GM10248 (cell line): ENCODE measurements at regions of chr13 and their contacts with region 1.

Region 1: DNA sequence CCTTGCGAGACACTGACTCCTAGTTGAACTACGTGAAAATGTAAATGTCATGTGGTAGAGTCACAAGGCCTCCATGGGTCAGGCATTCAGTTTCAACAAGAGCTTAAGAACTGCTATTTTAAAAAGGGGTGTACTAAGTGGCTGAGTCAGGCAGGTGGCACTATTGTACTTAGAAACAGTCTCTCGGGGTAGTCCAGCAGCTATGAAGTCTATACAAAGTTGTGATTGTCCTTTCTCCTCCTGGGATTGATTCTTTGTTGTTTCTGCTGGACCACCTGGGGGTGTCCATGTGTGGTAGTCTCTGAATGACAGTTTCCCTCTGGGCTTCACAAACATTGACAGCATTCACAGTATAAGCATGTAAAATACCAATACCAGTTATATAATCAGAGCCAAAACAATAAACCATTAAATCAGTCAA is 33.0 kb downstream of the UGGT2 start:
- DNase-seq: peak; percentile 41
- CTCF ChIP-seq: peak; percentile 63

Region 2: GRCh38 chr13:96003304-96003703 is 16.9 kb before region 1 on chr13:
- CTCF ChIA-PET with region 1: interaction called, 11 read pairs
- POLR2A ChIA-PET with region 1: no interaction called
- DNase-seq: no peak
- CTCF ChIP-seq: no peak

Region 3: DNA sequence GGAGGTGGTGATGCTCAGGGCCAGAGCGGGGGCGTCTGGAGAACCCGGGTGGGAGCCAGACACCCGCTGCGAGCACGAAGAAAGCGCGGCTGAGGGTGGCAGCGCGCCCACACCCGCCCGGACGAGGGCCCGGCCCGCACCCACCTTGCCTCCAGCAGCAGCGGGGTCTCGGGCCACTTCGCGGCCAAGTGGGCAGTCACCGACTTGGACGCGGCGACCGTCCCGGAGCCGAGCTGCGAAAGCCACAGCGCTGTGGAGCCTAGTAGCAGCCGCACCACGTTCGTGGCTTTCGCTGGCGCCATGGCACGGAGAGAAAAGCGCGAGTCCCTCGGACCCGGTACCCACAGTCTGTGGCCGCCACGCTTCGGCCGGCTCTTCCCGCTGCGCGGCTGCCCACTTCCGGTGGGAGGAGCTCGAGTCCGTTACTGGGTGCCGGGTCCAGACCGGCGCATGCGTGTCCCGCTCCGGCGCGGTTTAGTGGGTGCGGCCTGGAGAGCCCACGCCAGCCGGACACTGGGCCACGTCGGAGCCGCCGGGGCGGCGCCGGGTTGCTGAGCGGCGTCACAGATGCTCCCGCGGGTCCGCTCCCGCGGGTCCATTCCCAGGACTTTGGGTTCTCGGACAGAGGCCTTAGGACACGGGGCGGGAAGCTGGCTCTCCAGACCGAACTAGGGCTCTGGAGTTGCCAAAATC is 33.0 kb after region 1 on chr13 and contains the start of gene UGGT2:
- CTCF ChIA-PET with region 1: interaction called, 10 read pairs
- POLR2A ChIA-PET with region 1: no interaction called
- DNase-seq: peak; percentile 98
- CTCF ChIP-seq: no peak

Region 4: DNA sequence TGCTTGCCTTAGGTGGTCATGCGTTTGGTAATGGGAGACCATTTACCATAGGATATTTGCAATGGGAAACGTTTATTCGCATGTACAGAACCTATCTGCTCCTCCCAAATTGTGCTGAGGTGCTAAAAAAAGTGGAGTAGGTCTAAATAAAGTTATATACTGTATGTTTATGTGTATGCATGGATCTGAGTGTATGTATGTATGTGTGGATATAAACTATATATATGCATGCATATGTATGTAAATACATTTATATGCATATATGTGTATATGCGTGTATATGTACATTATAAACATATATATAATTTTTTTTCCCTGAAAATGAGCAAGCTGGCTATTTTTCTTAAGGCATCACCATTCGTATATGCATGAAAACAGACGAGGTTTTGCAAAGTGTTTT is 165.7 kb after region 1 on chr13:
- CTCF ChIA-PET with region 1: no interaction called
- POLR2A ChIA-PET with region 1: no interaction called
- DNase-seq: no peak
- CTCF ChIP-seq: no peak

Region 5: GRCh38 chr13:96229356-96229755 is 209.2 kb after region 1 on chr13:
- CTCF ChIA-PET with region 1: interaction called, 16 read pairs
- POLR2A ChIA-PET with region 1: no interaction called
- DNase-seq: peak; percentile 6
- CTCF ChIP-seq: peak; percentile 42

Region 6: DNA sequence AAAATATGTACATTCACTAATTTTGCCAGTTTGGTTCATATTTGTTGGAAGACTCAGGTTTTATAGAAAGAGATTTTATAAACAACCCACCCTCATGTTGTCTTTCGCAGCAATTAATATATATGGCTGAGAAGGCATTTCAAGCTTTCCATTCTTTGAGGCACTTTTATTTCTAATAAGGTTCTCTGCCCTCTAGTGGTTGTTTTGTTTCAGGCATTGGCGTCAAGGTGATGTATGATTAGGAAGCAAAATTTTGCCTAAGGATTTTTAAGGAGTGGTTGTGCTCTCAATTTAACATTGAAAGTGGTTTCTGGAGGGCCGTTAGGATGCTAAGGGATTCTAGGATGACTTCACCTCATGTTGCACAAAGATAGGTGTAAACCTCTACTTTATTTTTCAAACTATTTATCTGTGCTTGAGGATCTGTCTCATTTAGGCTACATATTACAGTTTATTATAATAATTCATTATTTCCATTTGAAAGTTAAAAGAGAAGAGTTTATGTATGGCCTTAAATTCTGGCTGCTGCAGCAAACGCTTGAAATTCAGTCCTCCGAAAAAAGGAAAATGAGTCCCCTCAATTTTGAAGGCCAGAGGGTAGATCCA is 938.2 kb after region 1 on chr13:
- CTCF ChIA-PET with region 1: interaction called, 38 read pairs
- POLR2A ChIA-PET with region 1: no interaction called
- DNase-seq: no peak
- CTCF ChIP-seq: peak; percentile 63